Activated T-helper 1 cell treated with anti-CD3 and anti-CD28 coated beads, Interleukin-12 subunit alpha, Interleukin-12 subunit beta, Interleukin-2, Interleukin-4 antibody, amounts not matched to agents 30 ng/mL and 10 ng/mL and 1 ng/mL, durations not matched to agents 14 hours and 24 hours and 36 hours (primary cell): ENCODE measurements at regions of chr1 and their contacts with region 1.

Region 1: GRCh38 chr1:111399792-111400610 is 27.5 kb downstream of the OVGP1 start:
- DNase-seq: no peak
- H3K4me3 Mint-ChIP-seq: no peak overlapping the region
- H3K27ac Mint-ChIP-seq: no peak overlapping the region
- H3K4me1 Mint-ChIP-seq: peaks cover 19% of the 10 kb centered on the region
- H3K27me3 Mint-ChIP-seq: peaks cover 41% of the 10 kb centered on the region

Region 2: GRCh38 chr1:111030590-111030989 is 369.4 kb before region 1 on chr1:
- intact Hi-C with region 1: loop called (anchors 5 kb)
- DNase-seq: peak; percentile 49
- H3K4me3 Mint-ChIP-seq: no peak overlapping the region
- H3K27ac Mint-ChIP-seq: no peak overlapping the region
- H3K4me1 Mint-ChIP-seq: no peaks in the 10 kb centered on the region
- H3K27me3 Mint-ChIP-seq: peaks cover 18% of the 10 kb centered on the region

Region 3: GRCh38 chr1:111139956-111140679 is 259.9 kb before region 1 on chr1 and contains the starts of genes CEPT1 and DRAM2:
- intact Hi-C with region 1: loop called (anchors 5 kb)
- DNase-seq: peak; percentile 89
- H3K4me3 Mint-ChIP-seq: peak within 1 kb of the TSS; percentile 100
- H3K27ac Mint-ChIP-seq: peak within 1 kb of the TSS; percentile 100
- H3K4me1 Mint-ChIP-seq: peaks cover 40% of the 10 kb centered on the region
- H3K27me3 Mint-ChIP-seq: no peaks in the 10 kb centered on the region
- total RNA-seq, gene CEPT1: 32.5 and 37.3 TPM in 2 replicates
- total RNA-seq, gene DRAM2: 24.0 and 26.6 TPM in 2 replicates

Region 4: DNA sequence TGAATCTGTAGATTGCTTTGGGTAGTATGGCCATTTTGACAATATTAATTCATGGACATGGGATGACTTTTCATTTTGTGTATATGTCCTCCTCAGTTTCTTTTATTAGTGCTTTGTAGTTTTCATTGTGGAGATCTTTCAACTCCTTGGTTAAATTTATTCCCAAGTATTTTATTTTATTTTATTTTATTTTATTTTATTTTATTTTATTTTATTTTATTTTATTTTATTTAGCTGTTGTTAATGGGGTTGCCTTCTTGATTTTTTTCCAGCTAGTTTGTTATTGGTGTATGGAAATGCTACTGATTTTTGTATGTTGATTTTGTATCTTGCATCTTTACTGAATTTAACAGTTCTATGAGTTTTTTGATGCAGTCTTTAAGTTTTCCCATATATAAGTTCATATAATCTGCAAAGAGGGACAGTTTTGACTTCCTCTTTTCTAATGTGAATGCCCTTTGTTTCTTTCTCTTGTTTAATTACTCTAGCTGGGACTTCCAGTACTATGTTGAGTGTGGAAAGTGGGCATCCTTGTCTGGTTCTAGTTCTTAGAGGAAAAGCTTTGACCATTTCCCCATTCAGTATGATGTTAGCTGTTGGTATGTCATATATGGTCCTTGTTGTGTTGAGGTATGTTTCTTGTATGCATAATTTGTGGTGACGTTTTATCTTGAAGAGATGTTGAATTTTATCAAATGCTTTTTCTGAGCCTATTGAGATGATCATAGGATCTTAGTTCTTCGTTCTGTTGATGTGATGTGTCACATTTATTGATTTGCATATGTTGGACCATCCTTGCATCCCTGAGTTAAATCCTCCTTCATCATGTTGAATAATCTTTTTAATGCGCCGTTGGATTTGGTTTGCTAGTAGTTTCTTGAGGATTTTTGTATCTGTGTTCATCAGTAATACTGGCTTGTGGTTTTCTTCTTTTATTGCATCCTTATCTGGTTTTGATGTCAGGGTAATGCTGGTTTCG is 245.7 kb before region 1 on chr1:
- intact Hi-C with region 1: no loop called
- DNase-seq: no peak
- H3K4me3 Mint-ChIP-seq: no peak overlapping the region
- H3K27ac Mint-ChIP-seq: no peak overlapping the region
- H3K4me1 Mint-ChIP-seq: peaks cover 57% of the 10 kb centered on the region
- H3K27me3 Mint-ChIP-seq: no peaks in the 10 kb centered on the region

Region 5: DNA sequence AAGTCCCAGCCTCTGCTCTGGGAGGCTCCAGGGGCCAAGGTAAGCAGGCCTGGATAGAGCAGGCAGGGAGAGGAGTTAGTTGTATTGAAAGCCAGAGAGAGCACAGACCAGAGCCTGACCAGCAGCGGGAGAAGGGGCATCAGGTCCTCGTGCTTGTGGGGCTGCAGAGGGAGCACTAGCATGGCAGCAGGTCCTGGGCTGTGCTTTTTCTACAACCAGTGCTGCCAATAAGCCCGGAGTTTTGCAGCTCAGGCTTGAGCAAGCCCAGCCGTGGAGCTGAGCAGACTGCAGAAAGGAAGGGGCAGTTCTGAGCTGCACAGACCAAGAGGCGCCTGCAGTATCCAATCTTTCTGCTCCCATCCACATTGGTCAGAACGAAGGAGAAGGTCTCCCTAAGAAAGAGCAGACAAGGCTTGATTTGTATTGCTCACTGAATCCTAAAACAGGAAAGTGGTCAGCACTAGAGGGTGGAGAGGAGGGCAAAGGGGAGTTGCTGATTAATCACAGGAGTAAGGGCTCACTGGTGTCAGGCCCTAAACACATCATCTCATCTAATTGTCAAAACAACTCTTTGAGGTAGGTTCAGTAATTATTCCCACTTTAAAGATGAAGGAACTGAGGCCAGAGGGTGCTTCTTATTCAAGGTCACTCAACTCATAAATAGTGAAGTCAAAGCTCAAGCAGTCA is 202.3 kb before region 1 on chr1:
- intact Hi-C with region 1: loop called (anchors 1 kb)
- DNase-seq: no peak
- H3K4me3 Mint-ChIP-seq: peak overlapping the region; percentile 100
- H3K27ac Mint-ChIP-seq: peak overlapping the region; percentile 99
- H3K4me1 Mint-ChIP-seq: peaks cover 81% of the 10 kb centered on the region
- H3K27me3 Mint-ChIP-seq: no peaks in the 10 kb centered on the region

Region 6: GRCh38 chr1:111275079-111275478 is 124.9 kb before region 1 on chr1:
- intact Hi-C with region 1: loop called (anchors 5 kb)
- DNase-seq: peak; percentile 8
- H3K4me3 Mint-ChIP-seq: no peak overlapping the region
- H3K27ac Mint-ChIP-seq: peak overlapping the region; percentile 37
- H3K4me1 Mint-ChIP-seq: peaks cover 26% of the 10 kb centered on the region
- H3K27me3 Mint-ChIP-seq: peaks cover 20% of the 10 kb centered on the region

Region 7: GRCh38 chr1:111346089-111346885 is 53.7 kb before region 1 on chr1:
- intact Hi-C with region 1: loop called (anchors 5 kb)
- DNase-seq: peak; percentile 78
- H3K4me3 Mint-ChIP-seq: peak overlapping the region; percentile 85
- H3K27ac Mint-ChIP-seq: peak overlapping the region; percentile 40
- H3K4me1 Mint-ChIP-seq: peaks cover 23% of the 10 kb centered on the region
- H3K27me3 Mint-ChIP-seq: peaks cover 6% of the 10 kb centered on the region

Region 8: GRCh38 chr1:111769517-111770146 is 369.6 kb after region 1 on chr1:
- intact Hi-C with region 1: loop called (anchors 5 kb)
- DNase-seq: peak; percentile 14
- H3K4me3 Mint-ChIP-seq: no peak overlapping the region
- H3K27ac Mint-ChIP-seq: no peak overlapping the region
- H3K4me1 Mint-ChIP-seq: peaks cover 15% of the 10 kb centered on the region
- H3K27me3 Mint-ChIP-seq: no peaks in the 10 kb centered on the region